OCI-LY7 (cell line): ENCODE measurements at regions of chr10 and their contacts with region 1.

Region 1: DNA sequence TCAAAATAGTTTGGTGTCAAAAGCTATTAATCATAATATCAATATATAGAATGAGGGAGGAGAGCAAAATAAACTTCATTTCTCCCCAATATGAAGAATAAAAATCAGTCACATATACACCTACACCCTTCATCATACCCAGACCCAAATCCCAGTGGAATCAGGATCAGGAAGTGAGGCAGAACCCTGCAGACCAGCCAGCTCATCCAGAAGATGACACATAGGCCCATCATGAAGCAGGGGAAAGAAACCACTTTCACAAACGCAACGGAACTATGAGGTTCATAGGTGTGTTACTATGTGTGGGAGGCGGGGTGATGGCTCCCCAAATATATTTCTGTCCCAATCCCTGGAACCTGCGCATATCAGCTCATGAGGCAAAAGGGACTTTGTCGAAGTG is 89.0 kb downstream of the RSU1 start:
- DNase-seq: no peak
- H3K4me3 ChIP-seq: no peak overlapping the region
- H3K27ac ChIP-seq: no peak overlapping the region
- H3K4me1 ChIP-seq: no peaks in the 10 kb centered on the region
- CTCF ChIP-seq: no peak

Region 2: GRCh38 chr10:15764892-15765454 is 963.3 kb before region 1 on chr10:
- CTCF ChIA-PET with region 1: no interaction called
- POLR2A ChIA-PET with region 1: no interaction called
- intact Hi-C with region 1: loop called (anchors 5 kb)
- DNase-seq: no peak
- H3K4me3 ChIP-seq: no peak overlapping the region
- H3K27ac ChIP-seq: no peak overlapping the region
- H3K4me1 ChIP-seq: no peaks in the 10 kb centered on the region
- CTCF ChIP-seq: no peak

Region 3: GRCh38 chr10:16817125-16818019 is 89.1 kb after region 1 on chr10 and contains the start of gene RSU1:
- CTCF ChIA-PET with region 1: no interaction called
- POLR2A ChIA-PET with region 1: no interaction called
- intact Hi-C with region 1: no loop called
- DNase-seq: peak; percentile 99
- H3K4me3 ChIP-seq: peak within 1 kb of the TSS; percentile 81
- H3K27ac ChIP-seq: peak within 1 kb of the TSS; percentile 20
- H3K4me1 ChIP-seq: peaks cover 12% of the 10 kb centered on the region
- CTCF ChIP-seq: no peak
- total RNA-seq, gene RSU1: 25.3 and 26.0 TPM in 2 replicates